Activated CD4-positive, alpha-beta T cell treated with anti-CD3 and anti-CD28 coated beads, Interleukin-2, amount 10 ng/mL, durations not matched to agents 24 days and 14 days (primary cell): ENCODE measurements at regions of chr15 and their contacts with region 1.

Region 1: DNA sequence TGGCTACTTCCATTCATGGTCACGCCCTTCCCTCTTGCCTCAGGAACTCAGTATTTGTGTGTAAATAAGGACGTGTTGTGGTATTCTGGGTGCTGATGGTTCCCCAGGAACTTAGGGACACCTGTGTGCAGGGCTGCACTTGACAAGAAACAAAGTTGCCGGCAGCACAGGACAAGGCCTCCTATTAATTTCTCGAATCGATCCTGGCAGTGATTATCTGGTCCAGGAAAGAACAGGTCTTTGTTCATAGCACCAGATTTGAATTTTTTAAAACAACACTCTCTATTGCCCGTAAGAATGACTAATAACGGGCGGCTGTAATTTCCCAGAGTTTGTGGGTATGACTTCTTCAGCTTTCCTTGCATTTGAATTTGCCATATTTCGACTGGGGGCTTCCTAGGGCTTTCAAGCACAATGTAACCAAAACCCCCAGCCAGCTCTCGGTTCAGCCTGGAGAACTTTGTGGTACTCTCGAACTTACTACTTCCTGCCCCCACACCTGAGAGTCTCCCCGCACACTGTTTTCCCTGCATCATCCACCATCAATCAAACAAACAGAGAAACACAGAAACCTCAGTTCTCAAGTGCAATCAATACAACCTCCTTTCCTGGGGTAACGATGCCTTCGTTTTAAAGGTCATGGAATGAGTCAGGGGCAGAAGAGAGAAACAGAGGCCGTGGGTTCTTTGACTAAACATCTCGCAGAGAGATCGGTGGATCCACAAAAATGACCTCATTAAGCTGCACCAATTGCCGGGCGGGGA is 241.7 kb upstream of the ICE2 start:
- DNase-seq: peak; percentile 85
- H3K4me3 Mint-ChIP-seq: peak overlapping the region; percentile 63
- H3K27ac Mint-ChIP-seq: peak overlapping the region; percentile 92
- H3K4me1 Mint-ChIP-seq: peaks cover 52% of the 10 kb centered on the region
- H3K27me3 Mint-ChIP-seq: no peaks in the 10 kb centered on the region

Region 2: GRCh38 chr15:60397772-60398445 is 322.8 kb before region 1 on chr15 and contains the start of gene ANXA2:
- intact Hi-C with region 1: loop called (anchors 2 kb)
- DNase-seq: peak; percentile 94
- H3K4me3 Mint-ChIP-seq: peak within 1 kb of the TSS; percentile 92
- H3K27ac Mint-ChIP-seq: peak within 1 kb of the TSS; percentile 94
- H3K4me1 Mint-ChIP-seq: peaks cover 51% of the 10 kb centered on the region
- H3K27me3 Mint-ChIP-seq: peaks cover 4% of the 10 kb centered on the region
- total RNA-seq, gene ANXA2: 214 and 225 TPM in 2 replicates

Region 3: GRCh38 chr15:60649845-60650548 is 70.7 kb before region 1 on chr15:
- intact Hi-C with region 1: loop called (anchors 1 kb)
- DNase-seq: peak; percentile 86
- H3K4me3 Mint-ChIP-seq: peak overlapping the region; percentile 75
- H3K27ac Mint-ChIP-seq: peak overlapping the region; percentile 86
- H3K4me1 Mint-ChIP-seq: peaks cover 44% of the 10 kb centered on the region
- H3K27me3 Mint-ChIP-seq: no peaks in the 10 kb centered on the region

Region 4: DNA sequence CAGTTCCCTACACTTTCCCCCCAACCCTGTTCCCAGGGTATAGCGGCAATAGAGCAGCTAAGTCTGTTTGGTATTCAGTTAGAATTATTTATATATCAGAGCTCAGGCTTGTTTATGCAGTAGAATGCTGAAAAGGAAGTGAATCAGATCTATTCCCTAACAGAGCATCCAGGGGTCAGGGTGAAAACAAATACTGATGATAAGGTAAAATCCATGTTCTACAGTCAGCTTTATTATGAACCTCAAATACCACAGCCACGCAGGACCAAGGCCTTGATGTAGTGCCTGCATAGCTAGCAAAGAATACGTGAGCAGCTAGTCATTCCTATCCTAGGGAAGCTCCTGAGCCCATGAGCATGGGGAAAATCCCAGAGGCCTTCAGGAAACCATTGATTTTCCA is 12.0 kb before region 1 on chr15:
- intact Hi-C with region 1: no loop called
- DNase-seq: no peak
- H3K4me3 Mint-ChIP-seq: no peak overlapping the region
- H3K27ac Mint-ChIP-seq: no peak overlapping the region
- H3K4me1 Mint-ChIP-seq: peaks cover 13% of the 10 kb centered on the region
- H3K27me3 Mint-ChIP-seq: no peaks in the 10 kb centered on the region

Region 5: DNA sequence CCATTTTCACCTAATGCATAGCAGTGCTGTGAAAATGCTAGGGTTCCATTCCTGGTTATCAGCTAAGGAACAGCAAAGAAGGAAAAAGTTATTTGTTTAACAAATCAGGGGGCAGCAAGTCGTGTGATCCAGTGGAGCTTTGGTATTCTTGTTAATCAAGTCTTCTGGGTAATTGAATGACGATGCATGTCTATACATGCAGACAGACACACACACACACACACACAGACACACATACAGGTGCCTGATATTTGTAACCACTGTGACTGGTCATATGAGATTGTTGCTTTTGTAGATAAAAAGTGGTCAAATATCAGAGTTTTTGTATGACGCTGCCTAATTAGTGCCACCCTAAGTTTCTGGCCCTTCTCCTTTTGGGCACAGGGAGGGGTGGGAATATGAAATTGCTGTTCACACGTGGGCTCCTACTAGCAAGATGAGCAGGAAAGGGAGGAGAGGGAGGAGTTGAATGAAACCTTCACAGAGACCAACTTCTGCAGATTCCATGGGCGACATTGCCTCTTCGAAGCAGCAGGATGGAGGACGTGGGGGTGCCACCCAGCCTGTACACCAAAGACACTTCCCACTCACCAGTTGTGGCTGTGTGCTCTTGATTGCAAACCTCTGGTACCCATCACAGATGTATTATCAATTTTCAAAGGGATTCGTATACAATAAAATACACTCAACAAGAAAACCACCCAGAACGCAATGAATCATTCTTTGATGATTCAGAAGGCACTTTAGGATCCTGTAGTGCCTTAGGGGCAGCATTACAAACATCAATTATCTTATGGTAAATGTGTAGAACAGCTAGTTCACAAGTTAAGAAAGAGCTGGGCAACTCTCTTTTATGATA is 40.2 kb after region 1 on chr15:
- intact Hi-C with region 1: loop called (anchors 2 kb)
- DNase-seq: no peak
- H3K4me3 Mint-ChIP-seq: no peak overlapping the region
- H3K27ac Mint-ChIP-seq: peak overlapping the region; percentile 32
- H3K4me1 Mint-ChIP-seq: peaks cover 21% of the 10 kb centered on the region
- H3K27me3 Mint-ChIP-seq: no peaks in the 10 kb centered on the region

Region 6: DNA sequence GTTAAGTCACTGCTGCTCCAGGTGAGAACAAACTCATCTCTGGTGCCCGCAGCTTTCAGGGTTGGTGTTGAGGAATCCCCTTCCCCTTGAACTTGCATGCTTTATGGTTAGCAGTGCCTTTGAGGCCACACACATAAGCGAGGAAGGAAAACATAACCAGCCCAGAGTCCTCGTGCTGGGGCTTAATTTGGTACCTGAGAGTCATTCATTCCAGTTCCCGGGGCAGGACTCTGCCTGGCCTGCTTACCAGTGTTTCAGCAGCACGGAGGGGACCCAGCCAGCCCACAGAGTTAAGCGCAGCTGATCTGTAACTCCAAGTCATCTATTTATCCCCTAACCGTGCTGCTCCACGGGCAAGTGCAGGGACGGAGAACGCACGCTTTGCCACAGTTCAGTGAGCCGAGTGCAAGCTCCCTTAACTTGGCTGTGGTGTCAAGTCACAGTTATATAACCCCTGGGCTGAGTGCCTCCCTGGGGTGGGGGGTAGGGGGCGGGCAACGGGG is 60.6 kb after region 1 on chr15:
- intact Hi-C with region 1: no loop called
- DNase-seq: no peak
- H3K4me3 Mint-ChIP-seq: no peak overlapping the region
- H3K27ac Mint-ChIP-seq: no peak overlapping the region
- H3K4me1 Mint-ChIP-seq: peaks cover 23% of the 10 kb centered on the region
- H3K27me3 Mint-ChIP-seq: no peaks in the 10 kb centered on the region

Region 7: DNA sequence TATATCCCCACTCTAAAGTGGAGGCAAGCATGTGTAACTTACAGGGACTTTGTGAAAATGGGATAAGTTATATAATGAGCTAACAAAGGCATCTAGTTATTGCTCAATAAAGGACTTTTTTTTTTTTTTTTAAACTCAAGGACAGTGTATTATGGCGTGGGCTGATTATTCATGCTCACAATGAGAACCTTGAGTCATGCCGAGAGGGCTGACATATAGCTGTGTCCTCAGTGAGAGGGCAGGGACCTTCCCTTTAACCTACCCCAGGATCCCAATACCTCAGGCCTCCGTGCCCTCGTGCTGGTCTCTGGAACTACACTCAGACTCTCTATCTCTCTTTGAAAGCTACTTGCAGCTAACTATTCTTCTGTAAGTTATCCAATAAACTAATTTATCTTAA is 78.1 kb after region 1 on chr15:
- intact Hi-C with region 1: loop called (anchors 1 kb)
- DNase-seq: no peak
- H3K4me3 Mint-ChIP-seq: peak overlapping the region; percentile 36
- H3K27ac Mint-ChIP-seq: peak overlapping the region; percentile 83
- H3K4me1 Mint-ChIP-seq: peaks cover 49% of the 10 kb centered on the region
- H3K27me3 Mint-ChIP-seq: no peaks in the 10 kb centered on the region

Region 8: DNA sequence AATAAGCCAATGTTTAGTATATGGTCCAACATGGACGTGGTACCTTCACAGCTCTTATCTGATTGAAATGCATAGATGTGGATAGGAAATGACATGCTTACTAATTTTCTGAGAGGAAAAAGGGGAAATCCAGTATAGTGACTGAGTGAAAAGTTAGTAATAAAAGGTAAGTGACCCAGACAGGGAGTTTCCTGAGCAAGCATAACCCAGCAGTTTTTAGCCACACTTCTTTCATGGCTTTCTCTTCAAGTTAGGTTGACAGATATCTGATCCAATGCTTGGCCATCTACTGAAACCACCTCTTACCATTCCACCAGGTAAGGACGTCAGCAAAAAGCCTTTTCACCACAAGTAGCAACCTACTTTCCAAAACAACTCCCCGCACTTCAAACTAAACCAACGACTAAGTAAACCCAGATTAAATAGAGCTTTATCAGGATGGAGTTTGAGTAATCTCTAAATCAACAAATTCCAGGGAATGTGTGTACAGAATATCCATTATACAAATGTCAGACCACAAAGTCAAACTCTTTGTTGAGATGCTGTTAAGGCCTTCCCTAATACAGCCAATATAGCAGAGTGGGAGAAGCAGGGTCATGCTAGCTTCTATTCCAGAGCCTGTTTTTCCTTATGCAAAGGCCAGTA is 178.8 kb after region 1 on chr15:
- intact Hi-C with region 1: loop called (anchors 1 kb)
- DNase-seq: peak; percentile 80
- H3K4me3 Mint-ChIP-seq: peak overlapping the region; percentile 43
- H3K27ac Mint-ChIP-seq: peak overlapping the region; percentile 82
- H3K4me1 Mint-ChIP-seq: peaks cover 49% of the 10 kb centered on the region
- H3K27me3 Mint-ChIP-seq: peaks cover 4% of the 10 kb centered on the region